Left cardiac atrium (tissue), 4 donors: ENCODE measurements at regions of chr13 and their contacts with region 1.

Region 1: GRCh38 chr13:88051746-88052482 is 380.7 kb downstream of the SLITRK5 start:
- DNase-seq: no peak
- ATAC-seq: no peak

Region 2: GRCh38 chr13:88948501-88948900 is 896.6 kb after region 1 on chr13:
- intact Hi-C with region 1: loop called in 1 of 2 experiments (anchors 5 kb)
- DNase-seq: no peak
- ATAC-seq: no peak